ENCODE measurements at regions of chr4 and their contacts with region 1.

Region 1: GRCh38 chr4:168318266-168318895 is at the start of gene DDX60:
- DNase-seq: peak; percentile 85
- H3K4me3 ChIP-seq: peak within 1 kb of the TSS; percentile 69 to 84 (median 80)
- H3K27ac ChIP-seq: peak within 1 kb of the TSS; percentile 89 to 93 (median 92)
- H3K4me1 ChIP-seq: peaks cover 0 to 15% (median 10%) of the 10 kb centered on the region in 4 donors
- H3K27me3 ChIP-seq: no peaks in the 10 kb centered on the region
- CTCF ChIP-seq: peak; percentile 33 to 63 (median 42)
- EP300 ChIP-seq: no peak
- POLR2A ChIP-seq: peak in 1 of 2 donors; percentile 63
- total RNA-seq, gene DDX60: 7.2 to 20.0 (median 13.7) TPM

Region 2: GRCh38 chr4:168257768-168258167 is 60.6 kb before region 1 on chr4:
- intact Hi-C with region 1: no loop called
- DNase-seq: no peak
- H3K4me3 ChIP-seq: no peak overlapping the region
- H3K27ac ChIP-seq: no peak overlapping the region
- H3K4me1 ChIP-seq: no peaks in the 10 kb centered on the region
- H3K27me3 ChIP-seq: no peaks in the 10 kb centered on the region
- CTCF ChIP-seq: no peak
- EP300 ChIP-seq: no peak
- POLR2A ChIP-seq: no peak

Region 3: GRCh38 chr4:168408620-168409019 is 90.2 kb after region 1 on chr4:
- intact Hi-C with region 1: loop called (anchors 2 kb)
- DNase-seq: peak; percentile 91
- H3K4me3 ChIP-seq: no peak overlapping the region
- H3K27ac ChIP-seq: peak overlapping the region; percentile 70 to 86 (median 82)
- H3K4me1 ChIP-seq: peaks cover 0 to 33% (median 21%) of the 10 kb centered on the region in 4 donors
- H3K27me3 ChIP-seq: no peaks in the 10 kb centered on the region
- CTCF ChIP-seq: no peak
- EP300 ChIP-seq: peak in 2 of 4 donors; percentile 30 to 64
- POLR2A ChIP-seq: no peak

Region 4: DNA sequence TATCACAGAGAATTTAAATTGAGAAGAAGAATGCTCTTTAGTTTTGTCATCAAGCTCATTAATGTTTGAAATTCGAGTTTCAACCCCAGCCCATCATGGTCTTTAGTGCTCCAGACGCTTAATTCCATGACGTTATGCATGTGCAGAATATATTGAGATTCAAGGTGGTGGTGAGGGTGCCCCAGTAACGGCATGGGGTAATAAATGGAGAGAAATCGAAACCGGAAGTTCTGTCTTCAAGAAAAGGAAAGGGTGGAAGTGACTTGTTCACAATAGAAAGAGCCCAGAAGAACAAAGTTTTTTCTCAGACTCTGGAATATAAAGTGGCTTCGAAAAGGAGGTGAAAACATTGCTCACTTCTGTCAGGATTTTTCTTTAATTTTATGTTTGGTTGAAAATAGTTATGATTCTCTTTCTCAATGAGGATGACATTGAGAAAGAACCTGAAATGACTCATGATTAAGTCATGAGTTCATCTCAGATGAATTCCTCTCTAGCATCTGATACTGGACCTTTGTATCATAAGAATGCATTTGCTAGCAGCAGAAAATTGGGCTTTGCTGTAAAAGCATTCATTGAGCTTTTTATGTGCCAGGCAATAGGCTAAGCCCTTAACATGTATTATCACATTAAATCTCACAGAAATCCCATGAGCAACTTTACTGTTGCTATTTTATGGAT is 162.7 kb after region 1 on chr4:
- intact Hi-C with region 1: loop called (anchors 2 kb)
- DNase-seq: peak; percentile 65
- H3K4me3 ChIP-seq: peak overlapping the region; percentile 60 to 79 (median 72)
- H3K27ac ChIP-seq: peak overlapping the region; percentile 88 to 95 (median 90)
- H3K4me1 ChIP-seq: peaks cover 0 to 15% (median 5%) of the 10 kb centered on the region in 4 donors
- H3K27me3 ChIP-seq: no peaks in the 10 kb centered on the region
- CTCF ChIP-seq: no peak
- EP300 ChIP-seq: no peak
- POLR2A ChIP-seq: no peak

Measured in sigmoid colon (tissue), 7 donors.